Right cardiac atrium (tissue), 5 donors: ENCODE measurements at regions of chr3 and their contacts with region 1.

Region 1: GRCh38 chr3:123652346-123652984 is 67.6 kb upstream of the HACD2 start:
- DNase-seq: peak; percentile 83 to 92 (median 91)
- ATAC-seq: peak; percentile 90 to 92
- H3K4me3 ChIP-seq: no peak overlapping the region
- H3K27ac ChIP-seq: peak overlapping the region; percentile 61
- H3K4me1 ChIP-seq: peaks cover 19% of the 10 kb centered on the region
- H3K27me3 ChIP-seq: no peaks in the 10 kb centered on the region

Region 2: DNA sequence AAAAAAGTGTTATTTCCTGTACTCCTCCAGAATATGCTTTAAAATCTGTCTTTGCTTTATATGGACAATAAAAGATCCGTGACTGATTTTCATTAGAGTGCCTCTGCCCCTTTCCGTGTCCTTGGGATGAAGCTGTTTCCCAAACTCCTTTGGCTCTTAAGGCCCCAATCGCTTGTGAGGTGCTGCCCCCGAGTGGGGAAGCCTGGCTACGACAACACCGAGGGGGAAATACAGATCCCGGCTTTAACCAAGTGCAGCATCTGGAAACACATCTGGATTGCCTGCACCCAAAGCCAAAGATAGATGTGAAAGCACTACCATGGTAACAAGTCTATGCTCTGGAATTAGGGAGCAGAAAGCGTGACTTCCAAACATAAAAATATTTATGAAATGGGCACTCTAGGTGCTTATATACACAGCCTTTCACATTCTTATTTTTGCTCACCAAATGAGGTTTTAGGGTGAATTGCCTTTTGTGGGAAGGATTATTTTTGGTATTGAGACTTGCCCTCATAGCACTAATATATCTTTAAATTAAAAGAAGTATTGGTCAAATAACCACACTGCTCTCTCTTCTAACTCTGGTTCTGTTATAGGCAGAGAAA is 163.0 kb before region 1 on chr3:
- intact Hi-C with region 1: no loop called
- DNase-seq: peak; percentile 65 to 85 (median 84)
- ATAC-seq: peak; percentile 77 to 79
- H3K4me3 ChIP-seq: no peak overlapping the region
- H3K27ac ChIP-seq: peak overlapping the region; percentile 66
- H3K4me1 ChIP-seq: no peaks in the 10 kb centered on the region
- H3K27me3 ChIP-seq: no peaks in the 10 kb centered on the region

Region 3: GRCh38 chr3:123700791-123701722 is 48.6 kb after region 1 on chr3:
- intact Hi-C with region 1: loop called (anchors 2 to 5 kb)
- DNase-seq: peak in 1 of 3 donors; percentile 62
- ATAC-seq: peak in 1 of 2 donors; percentile 49
- H3K4me3 ChIP-seq: peak overlapping the region; percentile 8
- H3K27ac ChIP-seq: no peak overlapping the region
- H3K4me1 ChIP-seq: peaks cover 7% of the 10 kb centered on the region
- H3K27me3 ChIP-seq: no peaks in the 10 kb centered on the region

Region 4: DNA sequence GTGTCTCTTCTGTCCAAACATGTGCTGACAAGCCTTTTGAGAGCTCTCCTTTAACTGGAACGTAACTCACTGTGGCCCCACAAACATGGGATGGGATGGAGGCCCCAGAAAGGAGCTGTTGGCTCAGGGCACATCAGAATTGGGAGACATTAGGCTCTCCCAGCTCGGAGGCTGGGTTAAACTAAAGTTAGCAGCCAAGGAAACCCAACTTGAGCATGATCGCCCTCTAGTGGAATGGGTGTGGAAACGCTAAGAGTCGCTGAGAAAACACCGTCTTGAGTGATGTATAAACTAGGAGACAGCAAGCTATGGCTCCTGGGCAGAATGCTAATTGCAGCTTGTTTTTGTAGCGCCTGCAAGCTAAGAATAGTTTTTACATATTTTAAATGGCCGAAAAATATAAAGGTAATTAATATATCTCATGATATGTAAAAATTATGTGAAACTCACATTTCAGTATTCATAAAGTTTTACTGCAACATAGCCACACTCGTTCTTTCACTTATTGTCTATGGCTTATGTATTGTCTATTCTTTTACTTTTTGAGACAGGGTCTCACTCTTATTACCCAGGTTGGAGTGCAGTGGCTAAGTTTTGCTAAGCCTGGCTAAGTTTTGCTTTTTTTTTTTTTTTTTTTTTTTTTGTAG is 71.2 kb after region 1 on chr3:
- intact Hi-C with region 1: loop called (anchors 2 to 5 kb)
- DNase-seq: peak in 2 of 3 donors; percentile 39 to 50
- ATAC-seq: peak; percentile 5 to 45
- H3K4me3 ChIP-seq: no peak overlapping the region
- H3K27ac ChIP-seq: no peak overlapping the region
- H3K4me1 ChIP-seq: peaks cover 6% of the 10 kb centered on the region
- H3K27me3 ChIP-seq: no peaks in the 10 kb centered on the region